Sciatic nerve (tissue), 2 donors: ENCODE measurements at regions of chr5 and their contacts with region 1.

Region 1: GRCh38 chr5:178590141-178590923 is at the start of gene COL23A1:
- DNase-seq: peak; percentile 68
- ATAC-seq: peak; percentile 53
- total RNA-seq, gene COL23A1: 10.7 TPM

Region 2: DNA sequence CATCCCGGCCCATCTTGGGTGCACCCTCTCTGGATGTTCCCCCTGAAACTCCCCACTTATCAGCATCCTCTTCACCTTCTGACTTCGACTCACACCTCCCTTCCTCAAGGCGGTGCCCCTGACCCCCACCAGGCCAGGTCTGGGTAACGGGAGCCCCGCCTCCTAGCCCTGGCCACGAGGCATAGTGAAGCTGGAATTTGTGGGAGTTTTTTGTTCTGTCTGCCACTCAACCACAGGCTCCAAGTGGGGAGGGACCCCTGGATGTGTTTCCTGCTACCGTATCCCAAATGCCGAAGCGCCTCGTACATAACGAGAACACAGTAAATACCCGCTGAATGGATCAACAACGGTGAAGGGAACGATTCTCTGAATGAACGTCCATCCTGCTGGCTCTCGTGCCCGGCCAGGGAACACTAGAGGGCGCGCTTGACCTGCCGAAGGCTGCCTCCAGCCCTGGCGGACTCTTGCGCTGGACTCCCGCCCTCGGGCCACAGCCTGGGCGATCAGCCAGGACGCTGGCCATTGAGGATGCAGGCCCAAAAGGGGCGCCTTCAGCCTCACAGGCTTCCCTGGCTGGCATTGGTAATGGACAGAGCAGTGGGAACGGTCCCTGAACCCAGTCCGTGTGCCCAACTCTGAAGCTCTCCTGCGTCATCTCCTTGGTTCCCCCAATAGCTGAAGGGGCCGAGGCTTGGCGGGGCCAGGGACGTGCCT is 310.4 kb before region 1 on chr5:
- intact Hi-C with region 1: loop called (anchors 5 kb)
- DNase-seq: peak; percentile 96
- ATAC-seq: peak; percentile 94

Region 3: DNA sequence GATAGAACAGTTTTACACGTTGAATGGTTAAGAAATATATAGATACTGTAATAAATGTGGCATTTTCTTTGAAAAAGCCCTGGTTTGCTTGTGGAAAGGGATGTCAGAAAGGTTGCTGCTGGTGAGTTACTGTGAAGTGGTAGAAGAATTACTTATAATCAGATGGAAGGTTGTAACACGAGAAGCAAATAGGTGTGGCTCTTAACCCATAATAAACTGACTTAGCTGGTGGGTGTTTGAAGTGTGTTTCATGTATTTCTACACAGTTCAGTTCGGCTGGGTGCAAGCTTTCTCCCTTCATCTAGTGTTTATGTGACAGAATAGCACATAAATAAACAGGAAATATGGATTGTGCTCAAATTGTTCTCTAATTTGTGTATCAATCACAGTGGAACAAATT is 1909.4 kb after region 1 on chr5:
- intact Hi-C with region 1: no loop called
- DNase-seq: no peak
- ATAC-seq: no peak